ENCODE measurements at regions of chr13 and their contacts with region 1.

Region 1: GRCh38 chr13:31161828-31162590 is at the start of gene HSPH1:
- DNase-seq: peak; percentile 99
- ATAC-seq: peak; percentile 85
- H3K4me3 Mint-ChIP-seq: peak within 1 kb of the TSS; percentile 97
- H3K27ac Mint-ChIP-seq: peak within 1 kb of the TSS; percentile 95
- H3K4me1 Mint-ChIP-seq: peaks cover 36% of the 10 kb centered on the region
- H3K27me3 Mint-ChIP-seq: no peaks in the 10 kb centered on the region
- CTCF ChIP-seq: no peak
- total RNA-seq, gene HSPH1: 107 and 112 TPM in 2 replicates

Region 2: GRCh38 chr13:30306762-30307193 is 855.2 kb before region 1 on chr13:
- CTCF ChIA-PET with region 1: no interaction called
- POLR2A ChIA-PET with region 1: no interaction called
- intact Hi-C with region 1: loop called (anchors 5 kb)
- DNase-seq: peak; percentile 86
- ATAC-seq: peak; percentile 86
- H3K4me3 Mint-ChIP-seq: peak overlapping the region; percentile 90
- H3K27ac Mint-ChIP-seq: peak overlapping the region; percentile 85
- H3K4me1 Mint-ChIP-seq: peaks cover 72% of the 10 kb centered on the region
- H3K27me3 Mint-ChIP-seq: no peaks in the 10 kb centered on the region
- CTCF ChIP-seq: no peak

Region 3: GRCh38 chr13:31199849-31200636 is 38.0 kb after region 1 on chr13 and contains the start of gene B3GLCT:
- CTCF ChIA-PET with region 1: interaction called, 4 read pairs
- POLR2A ChIA-PET with region 1: interaction called, 26 read pairs
- intact Hi-C with region 1: loop called (anchors 1 kb)
- DNase-seq: peak; percentile 87
- ATAC-seq: peak; percentile 83
- H3K4me3 Mint-ChIP-seq: peak within 1 kb of the TSS; percentile 84
- H3K27ac Mint-ChIP-seq: peak within 1 kb of the TSS; percentile 84
- H3K4me1 Mint-ChIP-seq: peaks cover 18% of the 10 kb centered on the region
- H3K27me3 Mint-ChIP-seq: no peaks in the 10 kb centered on the region
- CTCF ChIP-seq: peak; percentile 63
- total RNA-seq, gene B3GLCT: 2.9 and 3.0 TPM in 2 replicates

Region 4: DNA sequence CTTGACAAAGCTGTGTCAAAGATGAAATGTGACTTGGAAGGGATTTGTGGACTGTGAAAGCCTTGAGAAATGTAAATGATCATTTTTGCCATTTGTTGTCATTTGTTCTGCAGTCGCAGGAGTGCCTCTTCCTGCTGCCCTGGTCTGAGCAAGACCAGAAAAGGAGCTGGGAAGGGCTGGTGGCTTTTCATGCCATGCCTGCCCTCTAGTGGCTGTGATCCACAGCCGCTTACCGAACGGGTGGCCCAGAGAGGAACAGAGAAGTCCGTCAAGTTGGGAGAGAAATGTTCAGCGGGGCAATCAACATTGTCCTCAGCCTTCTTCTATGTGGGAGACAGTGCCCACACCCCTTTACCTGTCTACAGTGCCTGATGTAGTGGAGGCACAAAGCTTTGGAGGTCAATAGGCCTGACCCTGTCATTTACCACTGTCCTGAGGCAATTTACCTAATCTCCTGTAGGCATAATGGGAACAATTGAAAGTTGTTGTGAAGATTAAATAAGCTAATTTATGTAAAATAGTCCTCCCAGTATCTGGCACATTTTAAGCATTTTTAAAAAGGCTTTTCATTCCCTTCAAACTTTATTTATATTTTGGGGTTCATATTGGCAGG is 262.2 kb after region 1 on chr13:
- CTCF ChIA-PET with region 1: no interaction called
- POLR2A ChIA-PET with region 1: no interaction called
- intact Hi-C with region 1: loop called (anchors 1 kb)
- DNase-seq: peak; percentile 24
- ATAC-seq: peak; percentile 75
- H3K4me3 Mint-ChIP-seq: no peak overlapping the region
- H3K27ac Mint-ChIP-seq: no peak overlapping the region
- H3K4me1 Mint-ChIP-seq: no peaks in the 10 kb centered on the region
- H3K27me3 Mint-ChIP-seq: peaks cover 2% of the 10 kb centered on the region
- CTCF ChIP-seq: no peak

Region 5: DNA sequence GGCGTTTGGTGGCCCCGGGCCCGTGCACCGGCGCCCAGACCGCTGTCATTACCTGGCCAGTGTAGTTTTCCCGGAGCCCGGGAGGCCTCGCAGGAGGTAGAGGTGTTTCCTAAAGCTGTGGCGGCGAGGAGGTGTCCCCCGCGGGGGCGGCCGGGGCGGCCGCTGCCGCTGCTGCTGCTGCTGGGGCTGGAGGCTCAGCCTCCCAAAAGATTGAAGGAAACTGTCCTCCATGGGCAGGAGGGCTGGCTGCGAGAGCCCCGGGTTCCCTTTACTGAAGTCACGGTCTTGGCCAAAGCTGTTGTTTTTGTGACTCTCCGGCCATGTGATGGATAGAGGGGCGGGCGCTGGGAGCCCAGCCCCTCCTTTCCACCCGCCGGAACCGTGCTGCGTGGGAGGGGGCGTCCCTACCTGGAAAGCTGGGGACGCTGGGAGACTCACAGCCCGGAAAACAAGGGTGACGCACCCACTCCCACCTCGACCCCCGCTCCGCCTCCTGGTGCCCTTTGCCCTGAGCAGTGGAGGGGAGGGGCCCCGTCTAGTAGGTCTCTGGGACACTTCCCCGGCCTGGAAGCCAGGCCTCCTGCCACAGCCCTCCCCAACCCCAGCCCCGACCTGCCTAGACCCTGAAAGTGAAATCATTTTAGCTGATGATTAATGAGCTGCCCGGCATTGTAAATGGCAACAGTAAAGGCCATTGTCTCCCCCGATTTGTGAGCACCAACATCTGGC is 1266.0 kb after region 1 on chr13 and contains the start of gene N4BP2L1:
- CTCF ChIA-PET with region 1: no interaction called
- POLR2A ChIA-PET with region 1: no interaction called
- intact Hi-C with region 1: loop called (anchors 1 kb)
- DNase-seq: peak; percentile 77
- ATAC-seq: peak; percentile 73
- H3K4me3 Mint-ChIP-seq: peak within 1 kb of the TSS; percentile 95
- H3K27ac Mint-ChIP-seq: peak within 1 kb of the TSS; percentile 99
- H3K4me1 Mint-ChIP-seq: peaks cover 48% of the 10 kb centered on the region
- H3K27me3 Mint-ChIP-seq: no peaks in the 10 kb centered on the region
- CTCF ChIP-seq: no peak
- total RNA-seq, gene N4BP2L1: 23.0 and 24.3 TPM in 2 replicates